ENCODE measurements at regions of chr12 and their contacts with region 1.

Region 1: GRCh38 chr12:110600254-110600653 is 13.7 kb upstream of the TCTN1 start:
- DNase-seq: no peak
- ATAC-seq: peak; percentile 60

Region 2: GRCh38 chr12:110513842-110514241 is 86.4 kb before region 1 on chr12:
- intact Hi-C with region 1: loop called (anchors 5 to 10 kb)
- DNase-seq: no peak
- ATAC-seq: no peak

Region 3: GRCh38 chr12:110917466-110917865 is 317.2 kb after region 1 on chr12:
- intact Hi-C with region 1: no loop called
- DNase-seq: no peak
- ATAC-seq: no peak

Measured in left colon (tissue), 2 donors.